ENCODE measurements at regions of chr6 and their contacts with region 1.

Region 1: GRCh38 chr6:18317850-18318249 is 53.5 kb upstream of the DEK start:
- DNase-seq: no peak
- H3K4me3 ChIP-seq: no peak overlapping the region
- H3K27ac ChIP-seq: no peak overlapping the region
- H3K4me1 ChIP-seq: peaks cover 5% of the 10 kb centered on the region
- CTCF ChIP-seq: no peak

Region 2: GRCh38 chr6:17910189-17910588 is 407.7 kb before region 1 on chr6:
- CTCF ChIA-PET with region 1: no interaction called
- POLR2A ChIA-PET with region 1: no interaction called
- intact Hi-C with region 1: no loop called
- DNase-seq: no peak
- H3K4me3 ChIP-seq: no peak overlapping the region
- H3K27ac ChIP-seq: no peak overlapping the region
- H3K4me1 ChIP-seq: no peaks in the 10 kb centered on the region
- CTCF ChIP-seq: no peak

Region 3: DNA sequence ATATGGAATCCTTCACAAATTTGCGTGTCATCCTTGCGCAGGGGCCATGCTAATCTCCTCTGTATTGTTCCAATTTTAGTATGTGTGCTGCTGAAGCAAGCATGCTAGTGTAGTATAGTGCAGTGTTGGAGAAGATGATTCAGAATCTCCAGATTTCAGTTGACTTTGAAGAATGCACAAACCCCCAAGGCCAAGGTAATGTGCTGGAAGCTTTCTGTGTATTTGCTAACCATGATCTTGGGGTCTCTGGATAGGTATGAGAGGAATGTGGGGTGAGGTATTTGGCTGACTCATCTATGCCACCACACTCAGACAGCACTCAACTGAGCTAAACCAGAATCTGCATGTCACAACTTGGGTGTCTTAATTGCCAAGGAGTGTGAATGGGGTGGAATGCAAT is 10.9 kb before region 1 on chr6:
- CTCF ChIA-PET with region 1: no interaction called
- POLR2A ChIA-PET with region 1: interaction called, 10 read pairs
- intact Hi-C with region 1: no loop called
- DNase-seq: no peak
- H3K4me3 ChIP-seq: no peak overlapping the region
- H3K27ac ChIP-seq: no peak overlapping the region
- H3K4me1 ChIP-seq: peaks cover 7% of the 10 kb centered on the region
- CTCF ChIP-seq: no peak

Region 4: GRCh38 chr6:18477301-18477941 is 159.6 kb after region 1 on chr6:
- CTCF ChIA-PET with region 1: no interaction called
- POLR2A ChIA-PET with region 1: no interaction called
- intact Hi-C with region 1: no loop called
- DNase-seq: peak; percentile 70
- H3K4me3 ChIP-seq: no peak overlapping the region
- H3K27ac ChIP-seq: no peak overlapping the region
- H3K4me1 ChIP-seq: peaks cover 23% of the 10 kb centered on the region
- CTCF ChIP-seq: no peak